ENCODE measurements at regions of chr4 and their contacts with region 1.

Region 1: GRCh38 chr4:147019061-147019460 is 73.4 kb upstream of the TTC29 start:
- DNase-seq: peak; percentile 84
- H3K4me3 Mint-ChIP-seq: no peak overlapping the region
- H3K27ac Mint-ChIP-seq: no peak overlapping the region
- H3K4me1 Mint-ChIP-seq: peaks cover 26% of the 10 kb centered on the region
- H3K27me3 Mint-ChIP-seq: no peaks in the 10 kb centered on the region
- CTCF ChIP-seq: peak; percentile 89

Region 2: GRCh38 chr4:146763560-146763959 is 255.5 kb before region 1 on chr4:
- CTCF ChIA-PET with region 1: no interaction called
- POLR2A ChIA-PET with region 1: no interaction called
- intact Hi-C with region 1: no loop called
- DNase-seq: no peak
- H3K4me3 Mint-ChIP-seq: no peak overlapping the region
- H3K27ac Mint-ChIP-seq: no peak overlapping the region
- H3K4me1 Mint-ChIP-seq: no peaks in the 10 kb centered on the region
- H3K27me3 Mint-ChIP-seq: peaks cover 19% of the 10 kb centered on the region
- CTCF ChIP-seq: no peak

Region 3: DNA sequence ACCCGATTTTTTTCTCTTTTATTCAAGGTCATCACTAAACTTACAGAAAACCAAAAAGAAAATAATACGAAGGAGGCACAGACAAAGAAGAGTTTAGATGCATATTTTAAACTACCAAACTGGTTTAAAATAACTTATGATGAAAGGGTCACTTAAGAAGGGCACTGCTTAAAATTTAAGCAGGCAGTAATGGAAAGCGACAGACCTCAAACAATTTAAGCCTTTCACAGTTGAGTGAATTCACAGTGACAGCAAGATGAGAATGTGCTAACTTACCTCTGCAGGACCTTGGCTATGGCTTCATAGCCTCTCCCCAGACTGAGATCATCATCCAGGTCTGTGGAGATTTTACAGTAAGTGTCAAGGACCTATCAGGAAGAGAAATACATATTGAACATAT is 185.5 kb before region 1 on chr4:
- CTCF ChIA-PET with region 1: no interaction called
- POLR2A ChIA-PET with region 1: no interaction called
- intact Hi-C with region 1: no loop called
- DNase-seq: no peak
- H3K4me3 Mint-ChIP-seq: no peak overlapping the region
- H3K27ac Mint-ChIP-seq: no peak overlapping the region
- H3K4me1 Mint-ChIP-seq: no peaks in the 10 kb centered on the region
- H3K27me3 Mint-ChIP-seq: peaks cover 71% of the 10 kb centered on the region
- CTCF ChIP-seq: no peak

Region 4: GRCh38 chr4:147003956-147004809 is 14.9 kb before region 1 on chr4:
- CTCF ChIA-PET with region 1: interaction called, 16 read pairs
- POLR2A ChIA-PET with region 1: interaction called, 3 read pairs
- intact Hi-C with region 1: no loop called
- DNase-seq: no peak
- H3K4me3 Mint-ChIP-seq: no peak overlapping the region
- H3K27ac Mint-ChIP-seq: no peak overlapping the region
- H3K4me1 Mint-ChIP-seq: no peaks in the 10 kb centered on the region
- H3K27me3 Mint-ChIP-seq: no peaks in the 10 kb centered on the region
- CTCF ChIP-seq: no peak

Region 5: DNA sequence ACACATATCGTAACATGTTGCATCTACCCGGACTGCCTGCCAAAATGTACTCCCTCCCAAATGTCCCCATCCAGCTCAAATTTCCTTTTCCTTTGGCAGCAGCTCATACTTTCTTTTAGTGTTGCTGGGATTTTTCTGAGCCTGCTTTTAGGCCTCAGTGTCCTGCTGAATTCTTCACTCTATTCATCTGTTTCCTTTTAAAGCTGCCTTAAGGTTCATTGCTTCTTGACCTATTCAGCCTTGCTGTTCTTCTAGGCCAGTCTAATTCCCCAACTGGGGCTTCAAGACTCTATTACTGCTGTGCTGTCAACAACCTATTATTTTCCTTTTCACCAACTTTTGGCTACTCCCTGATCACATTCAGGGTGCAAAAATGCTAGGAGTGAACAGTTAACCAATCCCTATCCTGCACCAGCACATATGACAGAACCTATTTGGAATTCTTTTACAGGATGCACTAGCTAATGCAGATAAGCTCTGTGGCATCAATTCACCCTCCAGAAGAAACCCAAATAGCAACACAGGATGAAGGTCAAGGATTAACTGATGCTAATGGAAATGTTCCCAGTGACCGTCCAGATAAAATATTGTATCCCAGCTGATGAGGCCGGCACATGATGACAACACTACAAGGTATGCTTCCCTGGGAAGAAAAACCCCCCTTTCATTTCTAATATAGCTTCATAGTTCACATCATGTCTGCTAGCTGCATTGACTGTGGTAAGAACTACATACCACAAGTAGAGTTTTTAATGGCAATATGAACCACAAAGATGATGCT is 41.3 kb after region 1 on chr4:
- CTCF ChIA-PET with region 1: interaction called, 10 read pairs
- POLR2A ChIA-PET with region 1: interaction called, 3 read pairs
- intact Hi-C with region 1: no loop called
- DNase-seq: no peak
- H3K4me3 Mint-ChIP-seq: no peak overlapping the region
- H3K27ac Mint-ChIP-seq: no peak overlapping the region
- H3K4me1 Mint-ChIP-seq: peaks cover 16% of the 10 kb centered on the region
- H3K27me3 Mint-ChIP-seq: no peaks in the 10 kb centered on the region
- CTCF ChIP-seq: no peak

Region 6: GRCh38 chr4:147088146-147088545 is 69.1 kb after region 1 on chr4:
- CTCF ChIA-PET with region 1: interaction called, 37 read pairs
- POLR2A ChIA-PET with region 1: interaction called, 5 read pairs
- intact Hi-C with region 1: no loop called
- DNase-seq: no peak
- H3K4me3 Mint-ChIP-seq: no peak overlapping the region
- H3K27ac Mint-ChIP-seq: no peak overlapping the region
- H3K4me1 Mint-ChIP-seq: no peaks in the 10 kb centered on the region
- H3K27me3 Mint-ChIP-seq: no peaks in the 10 kb centered on the region
- CTCF ChIP-seq: no peak

Region 7: GRCh38 chr4:147312376-147313046 is 293.4 kb after region 1 on chr4:
- CTCF ChIA-PET with region 1: no interaction called
- POLR2A ChIA-PET with region 1: no interaction called
- intact Hi-C with region 1: no loop called
- DNase-seq: no peak
- H3K4me3 Mint-ChIP-seq: no peak overlapping the region
- H3K27ac Mint-ChIP-seq: no peak overlapping the region
- H3K4me1 Mint-ChIP-seq: no peaks in the 10 kb centered on the region
- H3K27me3 Mint-ChIP-seq: no peaks in the 10 kb centered on the region
- CTCF ChIP-seq: no peak

Region 8: GRCh38 chr4:147530723-147531122 is 511.7 kb after region 1 on chr4:
- CTCF ChIA-PET with region 1: no interaction called
- POLR2A ChIA-PET with region 1: no interaction called
- intact Hi-C with region 1: no loop called
- DNase-seq: no peak
- H3K4me3 Mint-ChIP-seq: no peak overlapping the region
- H3K27ac Mint-ChIP-seq: no peak overlapping the region
- H3K4me1 Mint-ChIP-seq: no peaks in the 10 kb centered on the region
- H3K27me3 Mint-ChIP-seq: no peaks in the 10 kb centered on the region
- CTCF ChIP-seq: no peak

Measured in MCF 10A (cell line).